WTC11 (cell line): ENCODE measurements at regions of chr9 and their contacts with region 1.

Region 1: GRCh38 chr9:14466429-14466818 is 152.5 kb upstream of the NFIB start:
- DNase-seq: peak; percentile 12
- ATAC-seq: peak; percentile 81
- H3K4me3 Mint-ChIP-seq: no peak overlapping the region
- H3K27ac Mint-ChIP-seq: no peak overlapping the region
- H3K4me1 Mint-ChIP-seq: peaks cover 22% of the 10 kb centered on the region
- H3K27me3 Mint-ChIP-seq: no peaks in the 10 kb centered on the region; the same call in 1 of the 2 replicates
- CTCF ChIP-seq: no peak

Region 2: GRCh38 chr9:14423815-14424261 is 42.6 kb before region 1 on chr9:
- CTCF ChIA-PET with region 1: no interaction called
- POLR2A ChIA-PET with region 1: no interaction called
- DNase-seq: no peak
- ATAC-seq: no peak
- H3K4me3 Mint-ChIP-seq: no peak overlapping the region
- H3K27ac Mint-ChIP-seq: no peak overlapping the region
- H3K4me1 Mint-ChIP-seq: peaks cover 62% of the 10 kb centered on the region
- H3K27me3 Mint-ChIP-seq: no peaks in the 10 kb centered on the region
- CTCF ChIP-seq: no peak

Region 3: GRCh38 chr9:14441976-14442651 is 24.3 kb before region 1 on chr9:
- CTCF ChIA-PET with region 1: interaction called, 15 read pairs
- POLR2A ChIA-PET with region 1: no interaction called
- DNase-seq: peak; percentile 65
- ATAC-seq: peak; percentile 99
- H3K4me3 Mint-ChIP-seq: no peak overlapping the region
- H3K27ac Mint-ChIP-seq: no peak overlapping the region
- H3K4me1 Mint-ChIP-seq: peaks cover 10% of the 10 kb centered on the region
- H3K27me3 Mint-ChIP-seq: no peaks in the 10 kb centered on the region
- CTCF ChIP-seq: peak; percentile 40

Region 4: GRCh38 chr9:14531341-14532269 is 65.2 kb after region 1 on chr9:
- CTCF ChIA-PET with region 1: interaction called, 10 read pairs
- POLR2A ChIA-PET with region 1: no interaction called
- DNase-seq: no peak
- ATAC-seq: no peak
- H3K4me3 Mint-ChIP-seq: no peak overlapping the region
- H3K27ac Mint-ChIP-seq: no peak overlapping the region
- H3K4me1 Mint-ChIP-seq: peaks cover 66% of the 10 kb centered on the region
- H3K27me3 Mint-ChIP-seq: peaks cover 2% of the 10 kb centered on the region; the same call in 1 of the 2 replicates
- CTCF ChIP-seq: no peak

Region 5: DNA sequence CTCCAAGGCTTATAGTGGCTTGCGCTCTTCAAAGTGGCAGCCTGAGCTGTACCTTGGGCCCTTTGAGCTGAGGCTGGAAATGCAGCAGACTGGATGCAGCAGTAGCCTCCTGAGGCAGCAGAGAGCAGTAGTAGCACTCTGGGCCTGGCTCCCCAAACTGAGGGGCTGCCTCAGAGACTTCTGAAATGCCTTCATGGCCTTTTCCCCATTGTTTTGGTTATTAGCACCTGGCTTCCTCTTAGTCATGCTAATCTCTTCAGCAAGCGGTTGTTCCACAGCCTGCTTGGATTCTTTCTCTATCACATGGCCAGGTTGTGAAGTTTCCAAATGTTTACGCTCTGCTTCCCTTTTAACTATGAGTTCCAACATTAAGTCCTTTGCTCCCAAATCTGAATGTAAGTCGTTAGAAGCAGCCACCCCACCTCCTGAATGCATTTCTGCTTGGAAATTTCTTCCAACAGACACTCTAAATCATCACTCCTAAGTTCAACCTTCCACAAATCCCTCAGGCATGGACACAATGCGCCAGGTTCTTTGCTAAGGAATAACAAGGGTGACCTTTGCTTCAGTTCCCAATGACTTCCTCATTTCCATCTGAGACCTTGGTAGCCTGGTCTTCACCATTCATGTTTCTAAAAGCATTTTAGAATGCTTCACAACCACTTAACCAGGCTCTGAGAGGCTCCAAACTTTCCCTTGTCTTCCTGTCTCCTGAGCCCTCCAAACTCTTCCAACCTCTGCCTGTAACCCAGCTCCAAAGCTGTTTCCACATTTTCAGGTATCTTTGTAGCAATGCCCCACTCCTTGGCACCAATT is 81.0 kb after region 1 on chr9:
- CTCF ChIA-PET with region 1: interaction called, 11 read pairs
- POLR2A ChIA-PET with region 1: interaction called, 3 read pairs
- DNase-seq: peak; percentile 87
- ATAC-seq: peak; percentile 100
- H3K4me3 Mint-ChIP-seq: 0 out of 2 replicates have a peak overlapping the region, but pooled peaks have one; percentile 10
- H3K27ac Mint-ChIP-seq: peak overlapping the region; percentile 100
- H3K4me1 Mint-ChIP-seq: peaks cover 56% of the 10 kb centered on the region
- H3K27me3 Mint-ChIP-seq: no peaks in the 10 kb centered on the region
- CTCF ChIP-seq: no peak

Region 6: DNA sequence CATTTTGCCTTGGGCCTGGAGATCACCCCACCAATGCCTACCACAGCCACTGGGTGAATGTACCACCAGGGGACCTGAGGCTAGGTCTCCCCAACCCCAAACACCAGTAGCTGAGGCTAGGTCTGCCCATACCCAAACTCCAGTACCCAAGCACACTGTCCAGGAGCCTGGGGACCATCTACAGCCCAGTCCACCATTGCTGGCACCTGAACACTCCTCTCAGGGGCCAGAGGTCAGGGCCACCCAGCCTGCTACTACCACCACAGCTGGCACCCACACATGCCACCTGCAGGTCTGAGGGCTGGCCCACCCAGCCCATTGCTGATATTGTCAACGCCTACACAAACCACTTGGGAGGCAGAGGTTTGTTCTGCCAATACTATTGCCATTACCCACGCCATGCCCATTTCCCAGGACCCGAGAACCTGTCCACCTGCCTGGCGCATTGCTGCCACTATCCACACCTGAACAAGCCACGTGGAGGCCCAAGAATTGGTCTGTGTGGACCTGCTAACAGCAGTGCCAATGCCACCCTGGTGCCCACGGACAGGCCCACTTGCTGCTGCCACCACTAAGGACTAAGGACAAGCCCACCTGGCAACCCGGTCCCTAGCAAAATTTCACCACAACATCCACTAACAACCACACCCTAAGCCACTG is 167.6 kb after region 1 on chr9:
- CTCF ChIA-PET with region 1: interaction called, 12 read pairs
- POLR2A ChIA-PET with region 1: no interaction called
- DNase-seq: no peak
- ATAC-seq: no peak
- H3K4me3 Mint-ChIP-seq: no peak overlapping the region
- H3K27ac Mint-ChIP-seq: no peak overlapping the region
- H3K4me1 Mint-ChIP-seq: peaks cover 15% of the 10 kb centered on the region
- H3K27me3 Mint-ChIP-seq: no peaks in the 10 kb centered on the region
- CTCF ChIP-seq: no peak

Region 7: GRCh38 chr9:14652729-14653377 is 186.4 kb after region 1 on chr9:
- CTCF ChIA-PET with region 1: interaction called, 26 read pairs
- POLR2A ChIA-PET with region 1: no interaction called
- DNase-seq: no peak
- ATAC-seq: peak; percentile 83
- H3K4me3 Mint-ChIP-seq: no peak overlapping the region
- H3K27ac Mint-ChIP-seq: no peak overlapping the region
- H3K4me1 Mint-ChIP-seq: peaks cover 5% of the 10 kb centered on the region; the same call in 1 of the 2 replicates
- H3K27me3 Mint-ChIP-seq: no peaks in the 10 kb centered on the region
- CTCF ChIP-seq: no peak

Region 8: DNA sequence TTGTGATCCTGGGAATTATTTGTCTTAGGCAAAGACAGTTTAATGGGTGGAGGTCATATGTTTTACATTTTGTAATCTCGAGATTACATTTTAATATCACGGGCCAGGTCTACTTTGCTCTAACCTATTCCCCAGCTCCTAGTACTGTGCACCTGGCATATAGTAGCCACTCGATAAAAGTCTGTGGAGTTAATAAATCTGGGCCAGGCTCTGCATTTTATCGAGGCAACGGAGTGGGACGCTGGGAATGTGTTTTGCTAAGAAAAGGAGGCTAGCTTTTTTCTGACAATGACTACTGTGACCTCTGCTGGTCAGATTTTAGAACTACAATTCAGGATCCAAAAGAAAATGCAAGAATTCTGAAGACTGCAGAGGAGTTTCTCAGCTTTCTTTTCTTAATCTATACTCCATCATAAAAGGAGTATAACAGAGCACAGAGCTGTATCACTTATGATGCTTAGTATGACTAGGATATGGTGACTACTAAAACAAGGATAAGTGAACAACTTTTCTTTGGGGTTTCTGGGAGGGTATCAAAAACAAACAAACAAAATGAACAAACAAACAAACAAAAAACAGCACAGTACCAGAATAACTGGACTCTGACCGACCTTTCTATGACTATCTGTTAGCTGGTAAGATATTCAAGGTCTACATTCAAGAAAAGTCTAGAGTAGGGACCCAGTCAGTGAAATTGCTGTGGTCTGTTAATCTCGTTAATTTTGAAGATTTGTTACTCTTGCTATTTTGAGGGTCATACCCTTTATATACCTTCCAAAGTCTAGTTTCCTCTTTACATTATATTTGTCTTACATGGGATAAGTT is 302.2 kb after region 1 on chr9:
- CTCF ChIA-PET with region 1: interaction called, 16 read pairs
- POLR2A ChIA-PET with region 1: no interaction called
- DNase-seq: peak; percentile 18
- ATAC-seq: peak; percentile 55; the same call in 1 of the 2 replicates
- H3K4me3 Mint-ChIP-seq: no peak overlapping the region; the same call in 1 of the 2 replicates
- H3K27ac Mint-ChIP-seq: no peak overlapping the region
- H3K4me1 Mint-ChIP-seq: peaks cover 6% of the 10 kb centered on the region
- H3K27me3 Mint-ChIP-seq: no peaks in the 10 kb centered on the region
- CTCF ChIP-seq: peak; percentile 65